HCT116 (cell line): ENCODE measurements at regions of chr20 and their contacts with region 1.

Region 1: DNA sequence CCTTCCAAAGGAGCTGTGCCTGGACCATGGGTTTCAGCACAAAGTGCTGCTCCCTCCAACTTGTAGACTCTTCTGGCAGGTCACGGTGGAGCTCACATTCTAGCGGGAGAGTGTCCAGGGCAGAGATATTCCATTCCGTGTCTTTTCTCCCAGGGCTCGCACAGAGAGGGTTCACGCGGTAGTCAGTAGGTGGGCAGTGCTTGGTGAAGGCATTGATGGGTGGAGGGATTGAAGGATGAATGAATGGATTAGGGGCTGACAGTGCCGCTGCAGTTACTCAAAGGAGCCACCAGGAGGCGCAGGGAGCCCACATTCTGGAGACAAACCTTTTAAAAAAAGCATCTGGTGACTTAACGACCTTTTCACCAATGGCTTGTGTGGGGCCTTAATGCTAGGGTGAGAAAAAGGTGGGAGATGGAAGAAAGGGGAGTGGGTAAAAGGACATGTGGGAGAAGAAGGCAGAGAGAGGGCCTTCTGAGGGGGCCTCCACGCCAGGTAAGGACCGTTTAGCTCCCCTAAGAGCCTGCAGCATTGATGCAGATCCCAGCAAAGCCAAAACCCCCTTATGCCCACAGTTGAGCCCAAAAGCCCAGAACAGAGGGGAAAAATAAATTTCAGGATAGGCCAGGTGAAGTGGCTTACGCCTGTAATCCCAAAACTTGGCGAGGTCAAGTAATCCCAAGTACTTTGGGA is 17.5 kb upstream of the FAM110A start:
- DNase-seq: peak; percentile 56
- ATAC-seq: peak; percentile 65
- H3K4me3 ChIP-seq: no peak overlapping the region
- H3K27ac ChIP-seq: no peak overlapping the region
- H3K4me1 ChIP-seq: peaks cover 8 to 16% of the 10 kb centered on the region in 2 experiments
- H3K27me3 ChIP-seq: no peaks in the 10 kb centered on the region
- CTCF ChIP-seq: peak; percentile 93 to 98 (median 95)
- POLR2A ChIP-seq: no peak
- RAD21 ChIP-seq: peak; percentile 97

Region 2: GRCh38 chr20:796921-797320 is 19.1 kb before region 1 on chr20:
- CTCF ChIA-PET with region 1: no interaction called
- POLR2A ChIA-PET with region 1: no interaction called
- RAD21 ChIA-PET with region 1: no interaction called
- intact Hi-C with region 1: no loop called
- DNase-seq: no peak
- ATAC-seq: no peak
- H3K4me3 ChIP-seq: no peak overlapping the region
- H3K27ac ChIP-seq: no peak overlapping the region
- H3K4me1 ChIP-seq: no peaks in the 10 kb centered on the region
- H3K27me3 ChIP-seq: no peaks in the 10 kb centered on the region
- CTCF ChIP-seq: no peak
- POLR2A ChIP-seq: no peak
- RAD21 ChIP-seq: no peak

Region 3: GRCh38 chr20:833450-834150 is 17.5 kb after region 1 on chr20 and contains the start of gene FAM110A:
- CTCF ChIA-PET with region 1: interaction called, 15 read pairs
- POLR2A ChIA-PET with region 1: interaction called, 3 read pairs
- RAD21 ChIA-PET with region 1: interaction called in 1 of 2 experiments, 3 read pairs
- intact Hi-C with region 1: no loop called
- DNase-seq: peak; percentile 83
- ATAC-seq: peak; percentile 96
- H3K4me3 ChIP-seq: peak within 1 kb of the TSS; percentile 54 to 84
- H3K27ac ChIP-seq: peak within 1 kb of the TSS; percentile 88
- H3K4me1 ChIP-seq: peaks cover 18 to 37% of the 10 kb centered on the region in 2 experiments
- H3K27me3 ChIP-seq: no peaks in the 10 kb centered on the region
- CTCF ChIP-seq: no peak
- POLR2A ChIP-seq: no peak
- RAD21 ChIP-seq: no peak
- total RNA-seq, gene FAM110A: 26.4 TPM

Region 4: GRCh38 chr20:887137-887536 is 71.1 kb after region 1 on chr20:
- CTCF ChIA-PET with region 1: interaction called, 5 read pairs
- POLR2A ChIA-PET with region 1: no interaction called
- RAD21 ChIA-PET with region 1: no interaction called
- intact Hi-C with region 1: loop called (anchors 2 kb)
- DNase-seq: no peak
- ATAC-seq: peak; percentile 53; the same call in 1 of the 2 replicates
- H3K4me3 ChIP-seq: no peak overlapping the region
- H3K27ac ChIP-seq: no peak overlapping the region
- H3K4me1 ChIP-seq: peaks cover 5 to 7% of the 10 kb centered on the region in 2 experiments; a peak in 3 of 4 replicates
- H3K27me3 ChIP-seq: no peaks in the 10 kb centered on the region
- CTCF ChIP-seq: no peak
- POLR2A ChIP-seq: no peak
- RAD21 ChIP-seq: no peak

Region 5: DNA sequence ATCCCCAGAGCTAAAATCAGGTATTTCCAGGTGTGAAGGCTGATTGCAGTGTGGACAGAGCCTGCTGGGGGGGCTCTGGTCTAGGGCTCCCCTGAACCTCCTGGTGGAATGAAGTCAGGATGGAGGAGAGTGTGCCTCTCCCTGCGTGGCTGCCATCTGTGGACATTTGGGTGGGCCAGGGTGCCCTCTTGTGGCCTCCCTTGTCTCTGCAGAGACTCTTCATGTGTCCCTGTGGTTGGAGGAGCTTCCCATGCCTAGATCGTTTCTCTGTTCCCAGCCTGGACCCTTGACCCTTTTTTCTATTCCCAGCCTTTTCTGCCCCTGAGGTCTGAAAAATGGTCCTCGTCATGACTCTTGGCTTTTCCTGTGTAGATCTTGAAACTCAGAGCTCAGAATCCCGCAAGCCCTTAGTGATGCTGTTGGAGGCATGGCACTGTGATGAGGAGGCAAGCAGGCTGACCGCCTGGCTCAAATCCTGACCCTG is 292.4 kb after region 1 on chr20:
- CTCF ChIA-PET with region 1: interaction called, 7 read pairs
- POLR2A ChIA-PET with region 1: no interaction called
- RAD21 ChIA-PET with region 1: no interaction called
- intact Hi-C with region 1: loop called (anchors 1 kb)
- DNase-seq: peak; percentile 26
- ATAC-seq: peak; percentile 98
- H3K4me3 ChIP-seq: no peak overlapping the region
- H3K27ac ChIP-seq: no peak overlapping the region
- H3K4me1 ChIP-seq: no peaks in the 10 kb centered on the region
- H3K27me3 ChIP-seq: no peaks in the 10 kb centered on the region
- CTCF ChIP-seq: peak; percentile 59 to 92 (median 78)
- POLR2A ChIP-seq: no peak
- RAD21 ChIP-seq: peak; percentile 68

Region 6: GRCh38 chr20:1212607-1213396 is 396.7 kb after region 1 on chr20:
- CTCF ChIA-PET with region 1: interaction called, 11 read pairs
- POLR2A ChIA-PET with region 1: no interaction called
- RAD21 ChIA-PET with region 1: no interaction called
- intact Hi-C with region 1: loop called (anchors 2 kb)
- DNase-seq: peak; percentile 66
- ATAC-seq: peak; percentile 99
- H3K4me3 ChIP-seq: peak overlapping the region in 1 of 2 experiments; percentile 28; a peak in 1 of 4 replicates
- H3K27ac ChIP-seq: no peak overlapping the region
- H3K4me1 ChIP-seq: peaks cover 6 to 19% of the 10 kb centered on the region in 2 experiments; a peak in 3 of 4 replicates
- H3K27me3 ChIP-seq: peaks cover 11% of the 10 kb centered on the region
- CTCF ChIP-seq: peak; percentile 71 to 79 (median 77)
- POLR2A ChIP-seq: no peak
- RAD21 ChIP-seq: peak; percentile 81